ENCODE measurements at regions of chr10 and their contacts with region 1.

Region 1: DNA sequence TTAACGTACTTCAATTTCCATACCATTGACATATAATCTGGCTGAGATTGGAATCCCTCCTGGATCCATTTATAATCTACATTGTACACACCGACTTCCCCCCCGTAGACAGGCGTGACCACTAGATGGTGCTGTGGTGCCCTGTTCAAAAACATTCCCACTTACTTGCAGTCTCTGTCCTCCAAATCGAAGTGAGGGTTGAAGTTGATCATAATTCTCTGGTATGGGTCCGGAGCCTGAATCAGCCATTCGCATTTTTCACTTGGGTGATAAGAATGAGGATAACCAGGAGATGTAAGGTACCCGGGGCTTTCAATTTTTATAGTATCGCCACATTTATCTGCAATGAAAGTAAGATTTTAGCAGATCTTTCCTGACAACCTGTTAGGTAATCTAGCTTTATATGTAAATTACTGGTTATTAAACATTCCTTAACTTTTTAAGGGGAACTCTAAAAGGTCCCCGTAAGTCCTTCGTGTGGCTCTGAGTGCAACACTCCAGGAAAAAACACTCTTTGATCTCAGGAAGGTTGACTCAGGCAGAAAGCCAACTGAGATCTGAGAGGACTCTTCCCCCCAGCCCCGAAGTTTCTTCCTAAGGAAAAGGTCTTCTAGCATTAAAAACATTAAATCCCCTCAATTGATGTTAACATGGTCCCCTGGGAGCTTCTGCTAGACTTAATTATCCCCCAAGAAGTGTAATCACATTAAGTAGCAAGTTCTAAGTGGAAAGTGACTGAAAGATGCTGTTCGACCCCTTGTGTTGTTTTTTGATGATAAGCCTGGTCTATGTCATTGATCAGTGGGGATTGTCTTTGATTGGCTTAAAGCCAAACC is 3.7 kb downstream of the NRP1 start:
- DNase-seq: peak; percentile 84
- H3K4me3 Mint-ChIP-seq: peak overlapping the region; percentile 94
- H3K27ac Mint-ChIP-seq: peak overlapping the region; percentile 46
- H3K4me1 Mint-ChIP-seq: peaks cover 41% of the 10 kb centered on the region
- H3K27me3 Mint-ChIP-seq: no peaks in the 10 kb centered on the region
- CTCF ChIP-seq: peak; percentile 77

Region 2: DNA sequence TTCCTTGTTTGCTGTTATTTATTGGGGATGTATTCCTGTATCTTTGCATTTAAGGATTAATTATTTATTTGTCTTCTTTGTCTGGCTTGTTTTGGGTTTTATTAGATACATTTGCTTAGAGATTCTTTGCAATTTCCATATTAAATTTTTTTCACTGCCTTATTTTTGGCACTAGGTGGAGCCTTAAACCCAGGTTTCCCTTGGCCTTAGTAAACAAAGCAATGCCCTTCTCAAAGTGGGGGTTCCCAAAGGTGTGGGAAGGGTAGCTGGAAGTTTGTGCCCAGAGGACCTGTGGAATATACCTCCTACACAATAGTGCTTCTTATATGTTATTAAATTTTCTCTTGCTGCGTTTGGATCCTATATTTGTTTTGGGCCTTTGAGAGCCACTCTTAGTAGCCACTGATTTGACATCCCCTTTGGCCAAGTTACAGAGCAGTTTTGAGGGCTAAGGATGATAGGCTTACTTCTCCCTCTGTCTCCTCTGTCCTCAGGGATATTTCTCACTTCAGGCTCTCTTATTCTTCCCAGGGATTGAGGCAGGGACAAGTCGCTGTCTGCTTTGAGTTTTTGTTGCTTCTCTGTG is 535.1 kb before region 1 on chr10:
- CTCF ChIA-PET with region 1: no interaction called
- POLR2A ChIA-PET with region 1: no interaction called
- intact Hi-C with region 1: loop called (anchors 10 kb)
- DNase-seq: peak; percentile 43
- H3K4me3 Mint-ChIP-seq: no peak overlapping the region
- H3K27ac Mint-ChIP-seq: no peak overlapping the region
- H3K4me1 Mint-ChIP-seq: no peaks in the 10 kb centered on the region
- H3K27me3 Mint-ChIP-seq: no peaks in the 10 kb centered on the region
- CTCF ChIP-seq: peak; percentile 67

Region 3: DNA sequence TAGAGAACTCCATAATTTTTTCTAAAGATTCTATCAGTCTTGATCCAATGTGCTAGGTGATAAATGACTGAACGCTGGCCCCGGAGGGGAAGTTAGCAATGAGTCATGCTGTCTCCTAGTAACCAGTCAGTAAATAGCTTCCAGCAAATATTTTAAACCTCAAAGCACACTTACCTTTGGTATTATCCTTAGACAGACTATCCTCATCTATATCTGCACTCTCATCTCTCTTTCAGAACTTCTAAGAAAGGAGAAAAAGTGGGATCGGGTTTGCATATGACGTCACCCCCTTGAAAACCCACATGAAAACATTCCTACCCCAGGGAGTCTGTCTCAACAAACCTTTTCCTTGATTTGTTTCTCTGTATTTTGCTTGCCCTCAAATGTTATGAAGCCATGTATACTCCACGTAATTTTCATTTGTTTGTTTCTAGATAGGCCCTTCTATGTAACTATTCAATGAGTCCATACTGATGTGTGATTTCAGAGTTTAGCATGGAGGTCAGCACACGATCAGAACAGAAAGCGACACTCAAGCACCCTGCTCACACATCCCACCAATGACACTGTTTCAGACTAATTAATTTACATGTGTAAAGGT is 178.6 kb after region 1 on chr10:
- CTCF ChIA-PET with region 1: no interaction called
- POLR2A ChIA-PET with region 1: no interaction called
- intact Hi-C with region 1: loop called (anchors 5 kb)
- DNase-seq: peak; percentile 89
- H3K4me3 Mint-ChIP-seq: no peak overlapping the region
- H3K27ac Mint-ChIP-seq: peak overlapping the region; percentile 94
- H3K4me1 Mint-ChIP-seq: peaks cover 28% of the 10 kb centered on the region
- H3K27me3 Mint-ChIP-seq: no peaks in the 10 kb centered on the region
- CTCF ChIP-seq: no peak

Region 4: DNA sequence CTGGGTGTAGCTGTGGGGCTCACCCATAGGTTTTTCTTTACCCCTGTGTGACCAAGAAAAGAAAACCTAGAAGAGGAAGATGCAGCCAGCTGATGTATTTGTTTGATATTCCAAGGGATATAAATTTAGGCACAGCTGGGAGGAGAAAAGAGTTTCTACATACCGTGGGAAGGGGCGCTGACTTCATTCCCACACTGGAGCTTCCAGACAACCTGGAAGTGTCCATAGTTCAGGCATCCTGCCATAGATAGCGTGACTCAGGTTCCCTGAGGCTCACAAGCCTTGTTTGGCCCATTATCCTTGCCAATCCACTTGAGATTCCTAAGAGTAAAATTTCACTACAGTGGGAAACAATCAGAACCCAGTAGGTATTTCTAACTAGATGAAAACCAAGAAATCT is 375.4 kb after region 1 on chr10:
- CTCF ChIA-PET with region 1: no interaction called
- POLR2A ChIA-PET with region 1: no interaction called
- intact Hi-C with region 1: loop called (anchors 5 kb)
- DNase-seq: peak; percentile 98
- H3K4me3 Mint-ChIP-seq: no peak overlapping the region
- H3K27ac Mint-ChIP-seq: peak overlapping the region; percentile 59
- H3K4me1 Mint-ChIP-seq: peaks cover 47% of the 10 kb centered on the region
- H3K27me3 Mint-ChIP-seq: no peaks in the 10 kb centered on the region
- CTCF ChIP-seq: no peak

Region 5: DNA sequence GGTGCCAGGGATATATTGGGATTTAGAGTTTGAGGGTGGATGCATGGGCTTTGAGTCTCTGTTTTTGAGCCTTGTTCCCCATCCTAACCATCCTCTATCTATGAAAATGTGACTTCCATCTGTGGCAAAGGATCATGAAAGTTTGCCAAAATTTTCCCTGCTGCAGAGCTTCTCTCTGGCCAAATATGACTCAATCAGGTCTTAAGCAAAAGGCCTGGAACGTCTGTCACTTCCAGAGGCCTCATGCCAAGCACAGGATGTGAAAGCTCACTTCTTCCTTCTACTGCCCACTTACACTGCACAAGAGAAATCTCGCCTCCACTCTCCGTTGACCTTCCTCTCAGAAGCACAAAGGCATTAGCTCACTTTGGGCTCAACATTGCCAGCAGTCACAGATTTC is 700.6 kb after region 1 on chr10:
- CTCF ChIA-PET with region 1: no interaction called
- POLR2A ChIA-PET with region 1: no interaction called
- intact Hi-C with region 1: loop called (anchors 10 kb)
- DNase-seq: peak; percentile 81
- H3K4me3 Mint-ChIP-seq: no peak overlapping the region
- H3K27ac Mint-ChIP-seq: peak overlapping the region; percentile 59
- H3K4me1 Mint-ChIP-seq: peaks cover 20% of the 10 kb centered on the region
- H3K27me3 Mint-ChIP-seq: no peaks in the 10 kb centered on the region
- CTCF ChIP-seq: no peak

Region 6: GRCh38 chr10:34171957-34172527 is 841.3 kb after region 1 on chr10:
- CTCF ChIA-PET with region 1: no interaction called
- POLR2A ChIA-PET with region 1: no interaction called
- intact Hi-C with region 1: loop called (anchors 5 kb)
- DNase-seq: peak; percentile 4
- H3K4me3 Mint-ChIP-seq: no peak overlapping the region
- H3K27ac Mint-ChIP-seq: no peak overlapping the region
- H3K4me1 Mint-ChIP-seq: peaks cover 11% of the 10 kb centered on the region
- H3K27me3 Mint-ChIP-seq: no peaks in the 10 kb centered on the region
- CTCF ChIP-seq: no peak

Region 7: DNA sequence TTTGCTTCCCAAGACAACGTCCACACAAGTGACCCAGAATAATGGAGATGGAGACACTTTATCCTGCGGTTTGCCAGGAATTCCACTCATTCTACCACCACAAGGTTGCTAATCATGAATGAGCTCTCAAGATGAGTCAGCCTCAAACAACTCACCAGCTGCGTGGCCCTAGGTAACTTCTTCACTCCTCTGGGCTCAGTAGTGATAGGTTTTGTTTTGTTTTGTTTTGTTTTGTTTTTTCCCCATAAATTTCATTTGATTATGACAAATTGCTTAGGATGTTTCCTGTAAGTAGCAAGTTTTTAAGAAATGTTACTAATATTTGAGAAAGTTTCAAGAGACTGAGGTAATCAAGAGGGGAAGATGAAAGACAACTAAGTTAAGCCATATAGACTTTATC is 1197.6 kb after region 1 on chr10:
- CTCF ChIA-PET with region 1: interaction called, 3 read pairs
- POLR2A ChIA-PET with region 1: no interaction called
- intact Hi-C with region 1: loop called (anchors 2 kb)
- DNase-seq: peak; percentile 94
- H3K4me3 Mint-ChIP-seq: peak overlapping the region; percentile 72
- H3K27ac Mint-ChIP-seq: peak overlapping the region; percentile 88
- H3K4me1 Mint-ChIP-seq: peaks cover 43% of the 10 kb centered on the region
- H3K27me3 Mint-ChIP-seq: no peaks in the 10 kb centered on the region
- CTCF ChIP-seq: no peak